B cell (primary cell): ENCODE measurements at regions of chr14 and their contacts with region 1.

Region 1: GRCh38 chr14:76962303-76962660 is 66.2 kb downstream of the IRF2BPL start:
- DNase-seq: no peak
- ATAC-seq: no peak
- H3K4me3 ChIP-seq: peak overlapping the region; percentile 22 to 57 (median 32)
- H3K4me3 Mint-ChIP-seq: peak overlapping the region; percentile 87
- H3K27ac ChIP-seq: peak overlapping the region; percentile 83 to 85
- H3K27ac Mint-ChIP-seq: peak overlapping the region; percentile 95
- H3K4me1 ChIP-seq: peaks cover 44 to 71% of the 10 kb centered on the region in 2 donors
- H3K4me1 Mint-ChIP-seq: peaks cover 72% of the 10 kb centered on the region
- H3K27me3 ChIP-seq: no peaks in the 10 kb centered on the region
- H3K27me3 Mint-ChIP-seq: no peaks in the 10 kb centered on the region
- CTCF ChIP-seq: no peak

Region 2: GRCh38 chr14:76759589-76759988 is 202.7 kb before region 1 on chr14:
- CTCF ChIA-PET with region 1: no interaction called
- POLR2A ChIA-PET with region 1: no interaction called
- intact Hi-C with region 1: no loop called
- DNase-seq: no peak
- ATAC-seq: no peak
- H3K4me3 ChIP-seq: no peak overlapping the region
- H3K4me3 Mint-ChIP-seq: peak overlapping the region; percentile 14
- H3K27ac ChIP-seq: no peak overlapping the region
- H3K27ac Mint-ChIP-seq: no peak overlapping the region
- H3K4me1 ChIP-seq: peaks cover 13 to 14% of the 10 kb centered on the region in 2 donors
- H3K4me1 Mint-ChIP-seq: peaks cover 10% of the 10 kb centered on the region
- H3K27me3 ChIP-seq: peaks cover 0 to 27% (median 10%) of the 10 kb centered on the region in 4 experiments
- H3K27me3 Mint-ChIP-seq: peaks cover 40% of the 10 kb centered on the region
- CTCF ChIP-seq: no peak

Region 3: GRCh38 chr14:76947078-76947837 is 15.0 kb before region 1 on chr14:
- CTCF ChIA-PET with region 1: interaction called, 33 read pairs
- POLR2A ChIA-PET with region 1: interaction called, 9 read pairs
- intact Hi-C with region 1: loop called (anchors 1 kb)
- DNase-seq: peak; percentile 90
- ATAC-seq: peak; percentile 95
- H3K4me3 ChIP-seq: peak overlapping the region in 1 of 5 experiments; percentile 24
- H3K4me3 Mint-ChIP-seq: peak overlapping the region; percentile 64
- H3K27ac ChIP-seq: no peak overlapping the region
- H3K27ac Mint-ChIP-seq: peak overlapping the region; percentile 56
- H3K4me1 ChIP-seq: peaks cover 11 to 15% of the 10 kb centered on the region in 2 donors
- H3K4me1 Mint-ChIP-seq: peaks cover 17% of the 10 kb centered on the region
- H3K27me3 ChIP-seq: no peaks in the 10 kb centered on the region
- H3K27me3 Mint-ChIP-seq: no peaks in the 10 kb centered on the region
- CTCF ChIP-seq: peak; percentile 67

Region 4: GRCh38 chr14:76997256-76997970 is 35.1 kb after region 1 on chr14:
- CTCF ChIA-PET with region 1: interaction called, 4 read pairs
- POLR2A ChIA-PET with region 1: interaction called, 5 read pairs
- intact Hi-C with region 1: loop called (anchors 5 kb)
- DNase-seq: no peak
- ATAC-seq: no peak
- H3K4me3 ChIP-seq: no peak overlapping the region
- H3K4me3 Mint-ChIP-seq: no peak overlapping the region
- H3K27ac ChIP-seq: no peak overlapping the region
- H3K27ac Mint-ChIP-seq: no peak overlapping the region
- H3K4me1 ChIP-seq: peaks cover 33 to 44% of the 10 kb centered on the region in 2 donors
- H3K4me1 Mint-ChIP-seq: peaks cover 37% of the 10 kb centered on the region
- H3K27me3 ChIP-seq: peaks cover 0 to 5% (median 0%) of the 10 kb centered on the region in 4 experiments
- H3K27me3 Mint-ChIP-seq: no peaks in the 10 kb centered on the region
- CTCF ChIP-seq: no peak

Region 5: DNA sequence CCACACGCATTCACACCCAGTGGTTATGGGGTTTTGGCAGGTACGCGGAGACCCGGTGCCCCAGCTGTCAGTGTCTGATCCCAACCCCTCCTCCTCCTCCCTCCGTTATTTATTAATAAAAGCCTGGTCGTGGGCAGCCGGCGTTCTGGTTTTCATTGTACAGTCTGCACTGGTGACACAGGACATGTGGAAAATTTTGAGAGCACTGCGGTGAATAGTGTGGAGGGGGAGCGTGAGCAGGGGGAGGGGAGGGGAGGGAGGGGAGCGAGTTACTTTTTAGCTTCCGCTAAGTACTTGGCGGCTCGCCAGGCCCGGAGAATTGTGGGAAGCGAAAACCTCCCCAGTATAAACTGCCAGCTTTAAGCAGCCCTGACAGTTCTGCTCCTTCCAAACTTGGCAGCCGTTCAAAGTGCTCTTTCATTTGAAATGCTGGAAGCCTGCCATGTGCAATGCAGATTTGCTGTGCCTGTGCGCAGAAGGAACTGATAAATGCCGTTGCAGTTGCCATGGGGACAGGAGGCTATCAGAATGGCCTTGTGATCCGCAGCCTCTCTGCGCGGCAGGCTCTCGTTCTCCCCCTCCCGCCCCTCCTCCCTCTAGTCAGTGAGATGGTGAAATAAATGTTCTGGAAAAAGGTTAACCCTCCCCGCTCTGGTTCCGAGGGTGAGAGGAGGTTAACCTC is 77.9 kb after region 1 on chr14:
- CTCF ChIA-PET with region 1: interaction called, 14 read pairs
- POLR2A ChIA-PET with region 1: interaction called, 13 read pairs
- intact Hi-C with region 1: loop called (anchors 1 kb)
- DNase-seq: peak; percentile 94
- ATAC-seq: peak; percentile 72
- H3K4me3 ChIP-seq: peak overlapping the region; percentile 11 to 70 (median 56)
- H3K4me3 Mint-ChIP-seq: peak overlapping the region; percentile 88
- H3K27ac ChIP-seq: peak overlapping the region; percentile 89 to 93
- H3K27ac Mint-ChIP-seq: peak overlapping the region; percentile 98
- H3K4me1 ChIP-seq: peaks cover 71 to 86% of the 10 kb centered on the region in 2 donors
- H3K4me1 Mint-ChIP-seq: peaks cover 79% of the 10 kb centered on the region
- H3K27me3 ChIP-seq: no peaks in the 10 kb centered on the region
- H3K27me3 Mint-ChIP-seq: no peaks in the 10 kb centered on the region
- CTCF ChIP-seq: no peak